ENCODE measurements at regions of chr14 and their contacts with region 1.

Region 1: DNA sequence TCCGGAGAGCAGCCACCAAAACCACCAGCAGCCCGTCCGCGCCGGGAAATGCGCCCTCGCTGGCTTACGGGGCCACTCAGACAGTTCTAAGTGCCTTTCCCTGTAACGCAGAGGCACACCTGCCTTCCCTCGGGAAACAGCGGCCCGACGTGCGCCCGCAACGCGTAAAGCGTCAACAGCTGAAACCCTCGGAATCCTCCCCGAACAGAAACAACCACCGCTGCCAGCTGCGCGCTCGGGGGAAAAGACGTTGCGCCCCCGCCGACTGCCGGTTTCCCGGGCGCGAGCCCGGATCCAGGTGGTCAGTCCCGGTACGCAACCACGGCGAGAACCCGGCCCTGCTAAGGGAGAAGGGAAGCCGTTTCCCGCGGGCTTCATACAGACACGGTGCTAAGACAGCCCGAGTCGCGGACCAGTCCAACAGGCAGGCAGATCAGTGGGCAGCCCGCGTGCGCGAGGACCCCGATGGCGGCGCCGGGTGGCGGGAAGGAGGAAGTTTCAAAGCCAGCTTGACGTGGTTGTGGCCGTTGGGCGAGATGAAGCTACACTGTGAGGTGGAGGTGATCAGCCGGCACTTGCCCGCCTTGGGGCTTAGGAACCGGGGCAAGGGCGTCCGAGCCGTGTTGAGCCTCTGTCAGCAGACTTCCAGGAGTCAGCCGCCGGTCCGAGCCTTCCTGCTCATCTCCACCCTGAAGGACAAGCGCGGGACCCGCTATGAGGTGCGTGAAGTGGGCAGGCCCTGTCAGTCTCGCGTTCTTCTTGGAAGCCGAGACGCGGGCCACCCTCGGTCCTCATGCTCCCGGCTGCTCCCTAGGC is at the start of gene LRR1:
- DNase-seq: peak; percentile 72 to 88
- H3K4me3 ChIP-seq: peak within 1 kb of the TSS; percentile 100
- H3K27ac ChIP-seq: peak within 1 kb of the TSS; percentile 83
- H3K4me1 ChIP-seq: peaks cover 29% of the 10 kb centered on the region
- H3K27me3 ChIP-seq: no peaks in the 10 kb centered on the region
- CTCF ChIP-seq: no peak
- total RNA-seq, gene LRR1: 16.1 and 19.0 TPM in 2 replicates

Region 2: DNA sequence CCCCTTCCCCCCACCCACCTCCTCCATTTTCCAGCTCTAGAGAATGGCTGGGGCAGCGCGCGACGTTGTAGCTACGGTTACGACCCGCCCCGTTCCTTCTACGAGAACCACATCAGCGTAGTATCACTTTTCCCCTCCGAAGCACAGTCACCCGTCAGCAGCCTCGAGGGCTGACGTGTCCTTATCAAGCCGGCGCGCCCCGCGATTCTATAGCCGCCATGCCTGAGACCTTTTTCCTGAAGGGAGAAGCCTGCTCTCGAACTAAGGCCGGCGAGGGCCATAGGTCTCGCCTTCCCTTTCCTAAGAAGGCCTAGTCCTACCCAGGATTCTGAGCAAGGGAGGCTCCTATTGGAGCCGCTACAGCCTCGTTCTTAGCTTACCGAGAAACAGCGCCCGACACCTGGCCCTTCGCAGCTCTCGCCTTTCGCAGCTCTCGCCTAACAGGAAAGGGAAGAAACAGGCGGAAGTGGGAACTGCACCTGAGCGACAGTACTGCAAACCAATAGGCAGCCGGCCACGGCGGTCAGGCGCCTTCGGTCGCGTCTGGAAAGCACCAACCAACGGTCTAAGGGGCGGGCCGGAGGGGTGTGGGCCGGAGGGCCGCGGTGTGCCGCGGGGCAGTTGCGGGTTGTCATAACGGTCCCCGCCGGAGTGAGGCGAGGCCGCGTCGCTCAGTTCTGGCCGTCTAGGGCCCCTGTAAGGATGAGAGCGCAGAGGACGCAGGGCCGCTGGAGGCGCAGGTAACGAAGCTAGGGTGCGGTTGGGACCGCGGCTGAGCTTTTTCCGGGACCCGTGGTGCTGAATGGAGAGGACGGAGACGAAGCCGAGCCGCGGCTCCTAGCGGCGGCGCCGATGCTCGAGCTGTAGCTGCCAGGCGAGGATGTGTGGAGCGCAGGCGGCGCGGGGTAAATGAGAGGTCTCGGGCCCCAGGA is 21.8 kb after region 1 on chr14 and contains the starts of genes MGAT2 and RPL36AL:
- CTCF ChIA-PET with region 1: interaction called, 5 read pairs
- POLR2A ChIA-PET with region 1: interaction called, 10 read pairs
- intact Hi-C with region 1: loop called (anchors 1 kb)
- DNase-seq: peak; percentile 92 to 98
- H3K4me3 ChIP-seq: peak within 1 kb of the TSS; percentile 100
- H3K27ac ChIP-seq: peak within 1 kb of the TSS; percentile 96
- H3K4me1 ChIP-seq: peaks cover 61% of the 10 kb centered on the region
- H3K27me3 ChIP-seq: no peaks in the 10 kb centered on the region
- CTCF ChIP-seq: no peak
- total RNA-seq, gene MGAT2: 18.9 and 22.0 TPM in 2 replicates
- total RNA-seq, gene RPL36AL: 120 and 151 TPM in 2 replicates

Region 3: GRCh38 chr14:50381823-50382287 is 783.2 kb after region 1 on chr14:
- CTCF ChIA-PET with region 1: no interaction called
- POLR2A ChIA-PET with region 1: interaction called, 13 read pairs
- intact Hi-C with region 1: no loop called
- DNase-seq: no peak
- H3K4me3 ChIP-seq: no peak overlapping the region
- H3K27ac ChIP-seq: no peak overlapping the region
- H3K4me1 ChIP-seq: no peaks in the 10 kb centered on the region
- H3K27me3 ChIP-seq: no peaks in the 10 kb centered on the region
- CTCF ChIP-seq: no peak